BJ (cell line): ENCODE measurements at regions of chr15 and their contacts with region 1.

Region 1: DNA sequence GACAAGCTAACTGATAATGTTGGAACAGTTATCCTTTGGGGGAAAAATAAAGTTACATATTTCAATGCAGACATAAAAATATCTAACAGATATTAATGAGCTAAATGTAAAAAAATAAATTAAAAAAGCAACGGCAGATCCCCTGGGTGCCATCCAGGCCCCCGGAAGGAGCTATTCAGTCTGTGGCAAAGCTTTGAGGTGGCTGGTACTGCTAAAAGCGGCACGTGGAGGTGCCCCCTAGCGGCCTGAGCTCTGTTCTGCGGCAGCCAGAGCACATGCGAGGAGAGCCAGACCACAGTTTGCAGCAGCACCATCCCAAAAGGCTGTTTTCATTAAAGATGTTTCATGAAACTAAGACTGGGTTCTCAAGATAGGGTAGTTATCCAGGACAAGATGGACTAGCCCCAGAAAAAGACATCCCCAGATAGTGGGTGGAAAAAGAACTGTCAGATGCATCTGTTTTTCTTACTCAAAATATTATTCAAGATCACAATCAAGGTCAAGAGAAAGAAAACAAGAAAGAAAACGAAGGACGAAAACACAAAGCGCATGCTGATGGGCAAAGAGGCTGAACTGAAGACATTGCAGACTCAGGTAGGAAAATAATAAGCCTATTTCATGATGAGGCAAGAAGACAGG is 18.7 kb downstream of the AP3S2 start:
- DNase-seq: no peak
- H3K4me3 ChIP-seq: no peak overlapping the region
- H3K27me3 ChIP-seq: no peaks in the 10 kb centered on the region
- CTCF ChIP-seq: peak; percentile 98

Region 2: DNA sequence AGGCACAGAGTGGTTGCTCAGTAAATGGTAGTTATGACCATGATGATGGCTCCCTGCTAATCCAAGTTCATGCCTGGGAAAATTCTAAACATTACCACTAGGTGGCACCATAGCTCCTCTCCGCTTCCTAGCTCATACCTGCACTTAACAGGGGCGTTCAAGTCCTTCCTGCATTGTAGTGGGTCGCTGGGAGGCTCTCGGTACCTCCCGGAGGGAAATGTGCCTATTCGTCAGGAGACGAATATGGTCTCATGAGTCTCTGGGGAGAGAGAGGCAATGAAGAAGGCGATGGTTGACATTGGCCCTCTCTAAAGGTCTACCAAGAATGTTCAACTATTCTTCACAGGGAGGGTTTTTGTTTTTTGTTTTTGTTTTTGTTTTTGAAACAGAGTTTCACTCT is 134.9 kb before region 1 on chr15:
- CTCF ChIA-PET with region 1: interaction called, 34 read pairs
- POLR2A ChIA-PET with region 1: no interaction called
- DNase-seq: peak; percentile 14
- H3K4me3 ChIP-seq: no peak overlapping the region
- H3K27me3 ChIP-seq: peaks cover 5% of the 10 kb centered on the region
- CTCF ChIP-seq: peak; percentile 87

Region 3: GRCh38 chr15:89768060-89768500 is 107.0 kb before region 1 on chr15:
- CTCF ChIA-PET with region 1: interaction called, 221 read pairs
- POLR2A ChIA-PET with region 1: no interaction called
- DNase-seq: peak; percentile 27
- H3K4me3 ChIP-seq: no peak overlapping the region
- H3K27me3 ChIP-seq: no peaks in the 10 kb centered on the region
- CTCF ChIP-seq: no peak

Region 4: DNA sequence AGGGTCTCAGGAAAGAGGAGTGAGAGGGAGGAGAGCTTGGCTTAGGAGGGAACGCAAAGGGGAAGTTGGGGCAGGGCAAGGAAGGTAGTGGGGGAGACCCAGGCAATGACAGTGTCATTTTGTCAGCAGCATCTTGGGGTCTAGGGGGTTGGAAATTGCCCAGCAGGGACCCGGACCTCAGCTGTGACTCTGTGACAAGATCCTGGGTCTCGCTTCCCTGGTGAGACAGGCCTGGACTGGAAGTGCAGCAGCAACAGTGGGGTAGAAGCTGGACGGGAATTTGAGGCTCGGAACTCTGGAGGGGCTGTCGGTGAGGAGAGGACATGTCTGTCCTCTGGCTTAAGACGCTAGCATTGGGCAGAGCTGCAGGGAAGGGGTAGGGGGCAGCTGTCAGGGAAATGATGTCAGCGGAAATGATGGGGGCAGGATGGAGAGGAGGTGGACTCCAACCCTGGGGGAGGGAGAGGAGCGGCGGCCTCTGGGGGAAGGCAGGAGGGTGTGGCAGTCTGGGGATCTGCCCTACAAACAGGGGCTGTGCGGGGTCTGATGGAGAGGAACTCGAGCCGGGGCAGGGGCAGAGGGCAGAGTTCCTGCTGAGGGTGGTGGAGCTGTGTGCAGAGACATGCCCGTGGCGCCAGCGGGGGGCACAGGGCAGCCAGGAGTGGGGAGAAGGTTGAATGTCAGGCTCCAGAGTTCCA is 72.7 kb before region 1 on chr15:
- CTCF ChIA-PET with region 1: interaction called, 10 read pairs
- POLR2A ChIA-PET with region 1: no interaction called
- DNase-seq: no peak
- H3K4me3 ChIP-seq: no peak overlapping the region
- H3K27me3 ChIP-seq: no peaks in the 10 kb centered on the region
- CTCF ChIP-seq: no peak

Region 5: DNA sequence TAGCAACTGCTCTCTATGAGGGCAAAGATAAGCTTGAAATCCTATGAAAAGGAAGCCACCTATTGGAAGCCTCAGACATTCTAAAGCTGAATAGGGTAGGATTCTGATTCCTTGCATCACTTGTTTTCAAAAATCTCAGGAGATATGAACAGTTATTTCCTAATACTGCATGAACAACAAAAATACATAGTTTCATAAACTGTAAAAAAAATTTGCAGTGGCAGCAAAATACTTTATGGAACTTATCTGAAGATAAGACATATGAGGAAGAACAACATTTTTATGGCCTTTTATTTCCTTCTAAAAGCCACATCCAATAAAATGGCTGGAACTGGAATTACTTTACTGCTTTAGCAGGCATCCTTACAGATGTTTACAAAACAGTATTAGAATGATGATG is 11.1 kb before region 1 on chr15:
- CTCF ChIA-PET with region 1: interaction called, 13 read pairs
- POLR2A ChIA-PET with region 1: no interaction called
- DNase-seq: no peak
- H3K4me3 ChIP-seq: no peak overlapping the region
- H3K27me3 ChIP-seq: no peaks in the 10 kb centered on the region
- CTCF ChIP-seq: peak; percentile 20; the same call in 1 of the 2 replicates